ENCODE measurements at regions of chr3 and their contacts with region 1.

Region 1: GRCh38 chr3:149812606-149813366 is at the start of gene RNF13:
- DNase-seq: peak; percentile 96
- H3K4me3 Mint-ChIP-seq: peak within 1 kb of the TSS; percentile 97
- H3K27ac Mint-ChIP-seq: peak within 1 kb of the TSS; percentile 99
- H3K4me1 Mint-ChIP-seq: peaks cover 43% of the 10 kb centered on the region
- H3K27me3 Mint-ChIP-seq: no peaks in the 10 kb centered on the region
- total RNA-seq, gene RNF13: 22.9 to 25.5 TPM

Region 2: DNA sequence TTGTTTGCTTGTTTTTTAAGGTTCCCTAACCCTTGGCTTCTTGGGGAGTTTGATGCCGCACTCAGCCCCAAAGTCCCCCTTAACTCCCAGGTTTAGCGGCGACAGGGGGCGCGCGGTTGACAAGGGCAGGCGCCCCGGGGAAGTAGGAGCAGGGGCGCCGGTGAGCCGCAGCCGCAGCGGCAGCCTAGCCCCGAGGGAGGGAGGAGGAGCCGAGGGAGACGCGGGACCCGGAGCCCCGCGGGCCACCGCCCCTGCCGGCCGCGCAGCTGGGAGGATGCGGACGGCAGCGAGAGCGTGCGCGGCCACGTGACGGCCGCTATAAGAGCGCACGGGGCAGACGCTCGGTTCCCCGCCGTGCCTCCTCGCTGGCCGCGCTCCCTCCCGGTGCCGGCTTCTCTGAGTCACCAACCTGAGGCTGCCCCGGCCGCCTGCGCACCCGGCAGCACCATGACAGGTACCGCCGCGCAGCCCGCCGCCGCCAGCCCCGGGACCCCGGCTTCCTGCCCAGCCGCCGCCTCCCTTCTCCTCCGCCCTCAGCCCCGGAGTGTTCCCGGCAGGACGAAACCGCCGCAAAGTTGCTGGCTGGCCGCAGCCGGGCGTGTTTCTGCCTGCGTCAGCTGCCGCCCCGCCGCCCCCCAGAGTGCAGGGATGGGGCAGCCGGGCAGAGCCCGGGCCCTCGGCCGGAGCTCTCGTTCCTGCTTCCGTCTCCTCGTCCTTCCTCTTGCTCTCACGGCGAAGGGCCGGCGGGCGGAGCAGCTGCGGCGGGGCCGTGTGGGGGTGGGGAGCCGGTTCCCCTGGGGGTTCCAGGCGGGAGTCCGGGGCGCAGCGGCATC is 821.4 kb before region 1 on chr3 and contains the start of gene GYG1:
- CTCF ChIA-PET with region 1: no interaction called
- intact Hi-C with region 1: loop called (anchors 10 kb)
- DNase-seq: peak; percentile 75
- H3K4me3 Mint-ChIP-seq: peak within 1 kb of the TSS; percentile 61
- H3K27ac Mint-ChIP-seq: peak within 1 kb of the TSS; percentile 33
- H3K4me1 Mint-ChIP-seq: peaks cover 19% of the 10 kb centered on the region
- H3K27me3 Mint-ChIP-seq: no peaks in the 10 kb centered on the region
- total RNA-seq, gene GYG1: 13.5 to 13.9 TPM

Region 3: DNA sequence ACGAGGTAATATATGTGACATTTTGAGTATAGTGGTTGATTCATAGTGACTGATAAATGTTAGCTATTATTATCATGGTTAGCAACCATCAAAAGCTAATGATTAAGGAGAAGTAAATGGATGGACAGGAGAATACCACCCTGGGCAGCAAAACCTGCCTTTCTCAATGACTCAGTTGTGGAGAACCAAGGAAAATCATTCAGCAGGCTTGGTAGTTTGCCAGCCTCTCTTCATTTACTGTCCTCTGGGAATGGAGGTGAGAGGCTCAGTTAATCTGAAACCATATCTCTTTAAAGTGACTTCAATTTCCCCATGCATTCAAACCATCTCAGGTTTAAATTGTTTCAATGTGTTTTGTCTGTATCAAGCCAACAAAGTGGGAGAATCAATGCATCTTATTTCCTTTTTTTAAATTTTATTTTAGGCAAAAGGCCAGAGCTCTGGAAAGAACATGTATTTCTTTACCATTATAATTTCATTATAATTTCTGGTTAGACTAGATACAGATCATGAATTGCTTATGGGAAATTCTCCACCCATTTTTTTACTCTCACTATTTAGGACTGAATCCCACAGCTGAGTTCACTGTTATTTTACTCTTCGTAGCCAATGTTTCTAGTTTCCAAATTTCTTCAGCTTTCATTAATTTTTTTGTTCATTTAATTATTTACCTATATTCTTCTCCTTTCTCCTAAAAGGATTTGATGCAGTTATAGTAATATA is 482.0 kb before region 1 on chr3:
- CTCF ChIA-PET with region 1: no interaction called
- intact Hi-C with region 1: no loop called
- DNase-seq: no peak
- H3K4me3 Mint-ChIP-seq: no peak overlapping the region
- H3K27ac Mint-ChIP-seq: no peak overlapping the region
- H3K4me1 Mint-ChIP-seq: no peaks in the 10 kb centered on the region
- H3K27me3 Mint-ChIP-seq: peaks cover 10% of the 10 kb centered on the region

Region 4: DNA sequence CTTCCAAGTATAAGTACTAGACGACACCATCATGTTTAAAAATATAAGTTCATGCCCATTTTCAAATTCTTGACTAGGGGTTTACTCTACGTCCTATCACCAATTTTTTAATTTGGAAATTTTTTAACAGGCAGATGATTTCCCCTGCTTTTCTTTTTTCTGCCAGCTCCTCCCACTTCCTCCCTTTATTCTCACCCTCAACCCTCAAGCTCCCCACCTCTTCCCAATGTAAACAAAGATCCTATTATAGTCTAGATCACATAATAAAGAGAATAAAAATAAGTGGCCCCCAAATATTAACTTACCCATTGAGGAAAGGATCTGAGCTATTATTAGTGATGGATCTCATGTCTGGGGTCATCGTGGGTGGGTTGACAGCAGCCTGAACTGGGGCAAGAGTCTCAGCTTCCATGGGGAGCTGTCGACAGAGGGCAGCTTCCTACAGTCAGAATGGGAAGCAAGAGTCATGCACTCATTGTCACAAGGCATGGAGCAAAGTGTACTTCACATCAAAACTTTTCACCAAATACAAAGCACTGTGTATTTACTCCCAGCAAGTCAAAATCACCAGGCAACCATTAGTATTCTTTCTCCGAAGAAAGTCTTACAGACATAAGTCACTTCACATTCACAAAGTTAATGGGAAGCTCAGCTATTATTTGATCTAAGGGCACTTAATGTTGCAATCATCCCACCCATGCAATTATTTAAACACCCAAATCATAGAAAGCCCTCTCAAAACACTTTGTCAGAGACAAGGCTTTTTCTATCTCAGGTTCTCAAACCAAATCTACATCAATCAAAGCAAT is 285.1 kb before region 1 on chr3:
- CTCF ChIA-PET with region 1: interaction called, 16 read pairs
- intact Hi-C with region 1: loop called (anchors 1 kb)
- DNase-seq: no peak
- H3K4me3 Mint-ChIP-seq: no peak overlapping the region
- H3K27ac Mint-ChIP-seq: no peak overlapping the region
- H3K4me1 Mint-ChIP-seq: no peaks in the 10 kb centered on the region
- H3K27me3 Mint-ChIP-seq: peaks cover 4% of the 10 kb centered on the region

Region 5: DNA sequence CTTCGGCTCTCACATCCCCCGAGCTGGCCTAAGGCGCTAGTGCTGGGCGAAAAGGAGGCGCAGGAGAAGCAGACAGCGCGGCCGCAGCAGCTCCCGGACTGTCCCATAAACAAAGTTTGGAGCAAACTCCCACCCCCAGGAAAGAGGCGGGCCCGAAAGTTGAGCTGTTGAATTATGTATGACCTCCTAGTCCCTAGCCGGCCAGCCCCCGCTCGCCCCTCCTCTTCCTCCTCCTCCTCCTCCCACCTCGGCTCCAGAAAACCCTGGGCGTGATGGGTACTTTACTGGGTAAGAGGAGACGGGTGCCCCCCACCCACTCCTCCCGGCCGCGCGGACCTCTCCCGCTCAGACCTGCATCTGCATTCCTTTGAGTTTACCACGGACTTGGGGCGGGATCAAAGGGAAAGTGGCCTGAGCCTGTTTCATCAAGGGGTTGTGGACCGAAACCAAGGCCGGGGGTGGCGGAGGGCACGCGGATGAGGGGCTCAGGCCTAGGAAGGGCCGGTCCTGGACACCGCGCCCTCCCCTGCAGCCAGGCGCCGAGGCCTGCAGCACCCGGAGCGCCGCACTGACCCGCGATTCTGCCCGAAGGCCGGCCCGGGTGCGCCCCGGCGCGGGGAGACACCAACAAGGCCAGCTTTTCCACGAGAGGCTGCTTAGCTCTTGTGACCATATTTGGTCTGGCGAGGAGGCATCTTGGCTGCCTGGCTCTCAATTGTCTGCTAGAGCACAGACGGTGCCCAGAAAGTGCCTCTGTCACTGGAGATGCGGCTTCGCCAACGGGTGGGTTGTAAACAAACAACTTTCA is 154.7 kb before region 1 on chr3 and contains the start of gene WWTR1:
- CTCF ChIA-PET with region 1: interaction called, 3 read pairs
- intact Hi-C with region 1: loop called (anchors 2 kb)
- DNase-seq: peak; percentile 59
- H3K4me3 Mint-ChIP-seq: peak within 1 kb of the TSS; percentile 81
- H3K27ac Mint-ChIP-seq: no peak within 1 kb of the TSS
- H3K4me1 Mint-ChIP-seq: peaks cover 11% of the 10 kb centered on the region
- H3K27me3 Mint-ChIP-seq: peaks cover 67% of the 10 kb centered on the region
- total RNA-seq, gene WWTR1: 0.19 to 0.42 TPM

Region 6: DNA sequence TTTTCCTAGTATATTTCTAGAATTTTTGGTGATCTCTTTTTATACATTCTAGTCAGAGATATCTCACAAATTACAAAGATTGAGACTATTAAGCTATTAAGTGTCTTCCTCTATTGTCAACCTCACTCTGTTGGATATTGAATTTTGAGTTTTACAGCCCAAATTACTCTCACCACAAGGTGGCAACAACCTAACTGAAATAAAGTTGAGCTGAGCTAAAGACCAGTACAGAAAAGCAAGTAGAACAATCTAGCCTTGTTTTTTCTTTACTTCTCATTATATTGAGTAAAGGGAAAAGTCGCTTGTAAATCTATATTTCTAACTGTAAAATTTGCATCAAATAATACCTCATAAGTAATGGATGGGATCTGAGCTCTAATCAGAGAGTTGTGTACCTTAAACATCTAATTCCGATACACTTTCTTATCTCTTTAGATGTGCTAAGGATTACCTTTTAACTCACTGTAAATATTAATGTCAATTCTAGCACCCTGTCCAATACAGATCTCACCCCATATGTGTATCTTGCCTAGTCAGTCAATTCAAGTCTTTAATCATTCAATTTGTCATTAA is 46.9 kb before region 1 on chr3:
- CTCF ChIA-PET with region 1: interaction called, 22 read pairs
- intact Hi-C with region 1: loop called (anchors 1 kb)
- DNase-seq: no peak
- H3K4me3 Mint-ChIP-seq: no peak overlapping the region
- H3K27ac Mint-ChIP-seq: no peak overlapping the region
- H3K4me1 Mint-ChIP-seq: no peaks in the 10 kb centered on the region
- H3K27me3 Mint-ChIP-seq: peaks cover 19% of the 10 kb centered on the region

Region 7: GRCh38 chr3:149850787-149851584 is 38.2 kb after region 1 on chr3:
- CTCF ChIA-PET with region 1: no interaction called
- intact Hi-C with region 1: no loop called
- DNase-seq: no peak
- H3K4me3 Mint-ChIP-seq: no peak overlapping the region
- H3K27ac Mint-ChIP-seq: no peak overlapping the region
- H3K4me1 Mint-ChIP-seq: peaks cover 7% of the 10 kb centered on the region
- H3K27me3 Mint-ChIP-seq: no peaks in the 10 kb centered on the region

Region 8: DNA sequence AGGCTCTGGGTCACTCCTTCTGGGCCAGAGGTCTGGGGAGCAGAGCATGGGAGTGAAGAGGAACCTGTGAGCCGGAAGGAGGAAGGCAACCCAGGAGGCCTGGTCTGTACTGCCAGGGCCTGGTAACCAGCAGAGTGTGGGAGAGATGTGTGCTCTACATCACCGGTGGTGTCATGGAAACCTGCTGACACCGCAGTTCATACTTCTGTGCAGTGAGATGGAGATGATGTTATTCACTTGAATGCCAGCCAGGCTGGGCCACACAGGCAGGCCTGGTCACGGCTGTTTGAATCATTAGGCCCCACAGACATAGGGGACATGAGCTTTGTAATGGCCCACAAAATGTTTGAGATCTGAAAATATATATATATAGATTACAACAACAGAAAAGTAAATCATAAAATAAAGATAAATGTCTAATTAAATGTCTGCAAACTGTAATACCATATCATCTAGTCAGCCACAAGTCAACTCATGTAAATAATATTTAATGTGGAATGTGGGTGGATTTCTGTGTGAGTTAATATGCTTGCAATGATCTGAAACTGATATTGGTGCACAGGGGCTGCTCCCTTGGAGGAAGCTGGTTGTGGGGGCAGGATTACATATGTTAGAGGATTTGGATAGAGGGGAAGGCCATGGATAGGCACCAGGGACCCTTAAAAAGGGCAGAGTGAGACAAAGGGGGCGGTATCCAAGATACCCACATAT is 266.4 kb after region 1 on chr3:
- CTCF ChIA-PET with region 1: no interaction called
- intact Hi-C with region 1: no loop called
- DNase-seq: no peak
- H3K4me3 Mint-ChIP-seq: no peak overlapping the region
- H3K27ac Mint-ChIP-seq: no peak overlapping the region
- H3K4me1 Mint-ChIP-seq: no peaks in the 10 kb centered on the region
- H3K27me3 Mint-ChIP-seq: peaks cover under 1% of the 10 kb centered on the region

Region 9: DNA sequence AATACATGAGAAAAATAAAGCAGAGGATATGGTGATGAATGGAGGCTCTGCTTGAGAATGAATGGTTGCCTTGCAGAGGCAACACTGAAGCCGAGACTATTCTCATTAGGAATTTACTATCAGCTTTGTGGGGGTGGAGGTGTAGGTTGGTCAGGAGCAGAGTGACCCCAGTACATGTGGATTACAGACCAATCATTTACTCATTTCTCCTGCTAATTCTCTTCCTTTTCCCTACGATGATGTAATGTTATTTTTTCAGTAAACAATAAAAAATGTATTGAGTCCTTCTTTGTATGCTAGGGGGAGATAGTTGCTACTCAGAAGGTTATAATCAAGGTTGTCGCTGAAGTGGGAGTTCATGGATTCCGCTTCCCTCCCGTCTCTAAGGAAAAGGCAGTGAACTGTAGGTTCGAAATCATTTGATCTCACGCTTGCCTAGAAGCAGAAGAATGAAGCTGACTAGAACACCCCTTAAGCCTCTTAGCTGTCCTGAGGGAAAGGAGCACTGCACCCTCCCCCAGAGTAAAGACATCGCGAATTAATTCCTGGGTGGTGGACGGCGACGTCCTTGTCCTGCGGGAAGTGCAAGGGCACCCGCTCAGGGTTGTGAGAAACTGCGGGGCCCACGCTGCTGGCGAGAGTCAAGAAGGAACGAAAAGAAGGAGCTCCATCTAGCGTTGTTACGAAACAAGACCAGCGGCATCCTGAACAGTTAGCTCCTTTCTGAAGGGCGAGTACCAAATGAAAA is 371.1 kb after region 1 on chr3:
- CTCF ChIA-PET with region 1: no interaction called
- intact Hi-C with region 1: loop called (anchors 5 kb)
- DNase-seq: peak; percentile 62
- H3K4me3 Mint-ChIP-seq: no peak overlapping the region
- H3K27ac Mint-ChIP-seq: no peak overlapping the region
- H3K4me1 Mint-ChIP-seq: no peaks in the 10 kb centered on the region
- H3K27me3 Mint-ChIP-seq: peaks cover 11% of the 10 kb centered on the region

Region 10: DNA sequence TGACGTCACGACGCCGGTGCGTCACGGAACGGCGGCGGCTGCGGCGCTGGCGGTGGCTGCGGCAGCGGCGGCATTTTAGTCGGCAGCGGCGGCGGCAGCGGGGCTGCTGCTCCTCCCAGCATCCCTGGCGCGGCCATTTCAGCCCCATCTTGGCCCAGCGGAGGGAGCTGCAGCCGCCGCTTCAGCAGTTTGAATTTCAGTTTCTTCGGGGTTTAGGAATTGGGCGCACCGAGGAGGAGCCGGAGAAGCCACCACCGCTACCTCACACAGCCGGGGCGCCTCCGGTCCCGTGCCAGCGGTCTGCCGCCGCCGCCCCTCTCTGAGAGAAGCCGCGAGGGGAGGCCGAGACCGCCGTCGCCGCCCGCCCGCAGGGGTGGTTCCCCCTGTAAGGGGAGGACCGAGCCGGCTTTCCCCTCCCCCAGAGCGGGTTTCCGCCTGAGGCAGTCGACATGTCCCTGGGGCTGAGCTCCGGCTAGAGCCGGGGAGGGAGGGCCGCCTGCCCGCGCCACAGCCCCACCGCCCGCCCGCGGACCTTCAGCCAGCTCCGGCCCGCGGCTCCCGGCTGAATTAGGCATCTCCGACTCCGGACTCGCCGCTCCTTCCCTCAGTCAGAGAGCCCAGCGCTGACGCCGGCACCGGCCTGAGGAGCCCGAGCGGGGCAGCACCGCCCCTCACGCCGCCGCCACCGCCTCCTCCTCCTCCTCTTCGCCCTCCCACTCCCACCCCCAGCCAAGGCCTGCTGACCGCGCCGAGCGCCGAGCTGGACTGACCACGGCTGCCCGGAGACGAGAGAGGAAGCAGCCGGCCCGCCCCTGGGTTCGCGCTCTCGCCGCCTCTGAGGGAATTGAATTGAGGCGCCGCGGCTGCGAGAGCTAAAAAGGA is 595.7 kb after region 1 on chr3 and contains the start of gene TSC22D2:
- CTCF ChIA-PET with region 1: no interaction called
- intact Hi-C with region 1: loop called (anchors 2 kb)
- DNase-seq: peak; percentile 96
- H3K4me3 Mint-ChIP-seq: peak within 1 kb of the TSS; percentile 77
- H3K27ac Mint-ChIP-seq: peak within 1 kb of the TSS; percentile 99
- H3K4me1 Mint-ChIP-seq: peaks cover 23% of the 10 kb centered on the region
- H3K27me3 Mint-ChIP-seq: no peaks in the 10 kb centered on the region
- total RNA-seq, gene TSC22D2: 13.0 to 13.7 TPM